ENCODE measurements at regions of chr6 and their contacts with region 1.

Region 1: DNA sequence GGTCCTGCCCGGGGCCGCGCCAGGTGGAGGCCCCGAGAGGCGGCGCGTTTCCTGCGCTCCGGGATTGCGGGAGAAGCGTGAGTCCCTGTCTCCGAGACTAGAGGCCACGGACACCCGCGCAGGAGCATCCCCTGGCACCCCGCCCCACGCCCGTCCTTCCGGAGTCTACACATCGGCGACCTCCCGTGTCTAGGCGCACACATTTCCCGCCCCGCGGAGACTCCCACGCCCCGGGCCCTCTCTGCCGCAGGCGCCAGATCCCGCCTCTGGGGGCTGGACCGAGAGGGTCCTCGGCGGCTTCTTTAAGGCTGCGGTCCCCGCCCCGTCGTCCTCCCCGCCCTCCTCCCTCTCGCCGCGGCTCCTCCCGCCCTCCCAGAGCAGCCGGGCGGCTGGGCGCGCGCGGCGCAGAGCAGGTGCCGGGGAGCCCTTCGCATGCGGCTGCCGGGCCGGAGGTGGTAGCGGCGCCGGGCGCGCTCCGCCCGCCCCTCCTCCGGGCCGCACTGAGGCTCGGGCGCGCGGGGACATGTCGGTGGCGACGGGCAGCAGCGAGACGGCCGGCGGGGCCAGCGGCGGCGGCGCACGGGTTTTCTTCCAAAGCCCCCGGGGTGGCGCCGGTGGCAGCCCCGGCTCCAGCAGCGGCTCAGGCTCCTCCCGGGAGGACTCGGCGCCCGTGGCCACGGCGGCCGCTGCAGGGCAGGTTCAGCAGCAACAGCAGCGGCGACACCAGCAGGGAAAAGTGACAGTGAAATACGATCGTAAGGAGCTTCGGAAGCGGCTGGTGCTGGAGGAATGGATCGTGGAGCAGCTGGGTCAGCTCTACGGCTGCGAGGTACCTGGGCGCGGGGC is at the start of gene PPP1R14C:
- DNase-seq: peak in 1 of 2 experiments; percentile 59
- H3K4me3 ChIP-seq: peak within 1 kb of the TSS; percentile 76
- H3K27ac ChIP-seq: peak within 1 kb of the TSS; percentile 71
- H3K4me1 ChIP-seq: peaks cover 68% of the 10 kb centered on the region
- H3K27me3 ChIP-seq: no peaks in the 10 kb centered on the region
- CTCF ChIP-seq: no peak
- total RNA-seq, gene PPP1R14C: 9.8 and 12.1 TPM in 2 replicates

Region 2: DNA sequence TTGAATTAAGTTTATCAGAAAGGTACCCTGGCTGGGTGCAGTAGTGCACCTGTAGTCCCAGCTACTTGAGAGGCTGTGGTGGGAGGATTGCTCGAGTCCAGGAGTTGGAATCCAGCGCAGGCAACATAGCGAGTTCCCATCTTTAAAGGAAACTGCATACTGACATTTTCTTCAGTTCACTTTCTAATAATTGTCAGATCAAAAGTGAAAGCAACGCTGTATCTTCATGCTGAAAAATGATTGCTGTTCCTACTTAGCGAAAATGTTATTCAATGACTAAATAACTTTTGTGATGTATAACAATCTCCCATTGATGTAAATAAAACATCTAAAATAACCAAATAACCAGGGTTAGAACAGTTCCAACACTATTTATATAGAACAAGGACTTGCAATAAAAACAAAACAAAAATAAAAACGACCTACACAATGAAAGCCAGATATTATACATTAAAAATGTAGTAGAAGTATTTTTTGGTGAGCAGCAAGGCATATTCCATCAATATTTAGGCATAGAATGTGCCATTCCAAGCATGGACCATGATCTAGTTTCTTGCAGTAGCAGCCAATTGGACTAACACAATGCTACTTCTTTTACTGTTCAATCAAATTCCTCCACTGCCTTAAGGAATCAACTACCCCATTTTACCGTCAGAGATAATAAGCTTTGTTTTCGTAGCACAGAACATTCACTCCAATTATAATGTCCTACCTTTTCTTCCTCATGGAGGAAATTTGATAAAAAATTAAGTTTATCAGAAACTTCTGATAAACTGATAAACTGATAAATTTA is 426.5 kb before region 1 on chr6:
- CTCF ChIA-PET with region 1: no interaction called
- POLR2A ChIA-PET with region 1: no interaction called
- intact Hi-C with region 1: no loop called
- DNase-seq: no peak
- H3K4me3 ChIP-seq: peak overlapping the region; percentile 79
- H3K27ac ChIP-seq: peak overlapping the region; percentile 92; the same call in 1 of the 2 replicates
- H3K4me1 ChIP-seq: peaks cover 21% of the 10 kb centered on the region; the same call in 1 of the 2 replicates
- H3K27me3 ChIP-seq: no peaks in the 10 kb centered on the region
- CTCF ChIP-seq: no peak

Region 3: DNA sequence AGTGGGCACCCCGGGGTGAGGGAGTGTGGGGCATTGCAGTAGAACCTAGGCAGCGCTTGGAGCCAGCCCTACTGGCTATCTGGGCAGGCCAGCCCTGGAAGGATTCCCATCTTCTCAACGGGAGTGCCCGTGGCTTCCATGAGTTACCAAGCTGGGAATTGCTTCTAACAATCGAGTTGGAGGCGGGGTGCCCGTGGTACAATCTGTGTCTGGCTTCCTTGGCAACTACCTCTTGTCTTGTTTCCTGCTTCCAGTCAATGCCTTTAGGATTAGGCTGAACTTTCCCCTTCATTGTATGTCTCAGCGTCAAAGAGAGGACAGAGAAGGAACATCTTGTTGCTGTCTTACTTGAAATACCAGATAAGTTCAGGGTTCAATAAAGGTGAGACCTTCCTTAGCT is 33.3 kb after region 1 on chr6:
- CTCF ChIA-PET with region 1: no interaction called
- POLR2A ChIA-PET with region 1: interaction called, 10 read pairs
- intact Hi-C with region 1: loop called (anchors 1 kb)
- DNase-seq: peak; percentile 43 to 71
- H3K4me3 ChIP-seq: no peak overlapping the region
- H3K27ac ChIP-seq: peak overlapping the region; percentile 76
- H3K4me1 ChIP-seq: peaks cover 48% of the 10 kb centered on the region
- H3K27me3 ChIP-seq: no peaks in the 10 kb centered on the region
- CTCF ChIP-seq: no peak

Region 4: DNA sequence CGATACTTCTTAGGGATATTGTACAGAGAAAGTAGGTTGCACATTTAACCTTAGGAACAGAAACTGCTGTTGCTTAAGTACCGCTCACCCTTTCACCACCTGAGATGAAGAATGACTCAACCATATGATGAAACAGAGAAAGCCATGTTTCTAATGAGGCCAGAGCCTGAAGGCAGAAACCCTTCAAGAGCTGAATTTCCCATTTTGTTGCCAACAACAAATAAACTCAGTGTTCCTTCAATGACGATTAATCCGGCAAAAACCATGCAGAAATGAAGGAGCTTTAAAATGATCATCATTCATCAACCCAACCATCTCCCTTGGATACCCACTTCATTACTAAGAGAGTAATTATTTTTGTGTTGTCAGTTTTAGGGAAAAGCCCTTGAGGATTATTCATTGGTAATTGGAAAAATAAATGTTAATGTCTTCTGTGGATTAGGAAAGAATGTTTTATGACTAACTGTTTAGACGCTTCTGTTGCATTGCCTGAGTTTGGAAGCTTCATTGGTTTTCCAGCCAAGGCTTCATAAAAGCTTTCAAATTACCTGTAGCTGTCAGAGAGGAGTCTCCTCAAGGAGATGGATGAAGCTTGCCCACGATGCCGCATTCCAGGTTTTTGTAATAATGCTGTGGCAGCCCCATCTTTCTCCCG is 113.9 kb after region 1 on chr6:
- CTCF ChIA-PET with region 1: no interaction called
- POLR2A ChIA-PET with region 1: no interaction called
- intact Hi-C with region 1: loop called (anchors 5 kb)
- DNase-seq: peak; percentile 26 to 93
- H3K4me3 ChIP-seq: peak overlapping the region; percentile 14; the same call in 1 of the 2 replicates
- H3K27ac ChIP-seq: peak overlapping the region; percentile 96
- H3K4me1 ChIP-seq: peaks cover 62% of the 10 kb centered on the region
- H3K27me3 ChIP-seq: no peaks in the 10 kb centered on the region
- CTCF ChIP-seq: no peak

Region 5: GRCh38 chr6:150276168-150276936 is 133.5 kb after region 1 on chr6:
- CTCF ChIA-PET with region 1: interaction called, 10 read pairs
- POLR2A ChIA-PET with region 1: no interaction called
- intact Hi-C with region 1: no loop called
- DNase-seq: no peak
- H3K4me3 ChIP-seq: no peak overlapping the region
- H3K27ac ChIP-seq: no peak overlapping the region
- H3K4me1 ChIP-seq: no peaks in the 10 kb centered on the region
- H3K27me3 ChIP-seq: no peaks in the 10 kb centered on the region
- CTCF ChIP-seq: no peak

Measured in PC-9 (cell line).